Activated T-helper 1 cell treated with anti-CD3 and anti-CD28 coated beads, Interleukin-12 subunit alpha, Interleukin-12 subunit beta, Interleukin-2, Interleukin-4 antibody, amounts not matched to agents 30 ng/mL and 10 ng/mL and 1 ng/mL, durations not matched to agents 14 hours and 24 hours and 36 hours (primary cell): ENCODE measurements at regions of chr9 and their contacts with region 1.

Region 1: GRCh38 chr9:94213511-94214124 is 45.5 kb upstream of the ZNF169 start:
- DNase-seq: peak; percentile 66
- H3K4me3 Mint-ChIP-seq: no peak overlapping the region
- H3K27ac Mint-ChIP-seq: peak overlapping the region; percentile 3
- H3K4me1 Mint-ChIP-seq: peaks cover 5% of the 10 kb centered on the region
- H3K27me3 Mint-ChIP-seq: peaks cover 3% of the 10 kb centered on the region

Region 2: GRCh38 chr9:93682232-93682968 is 531.2 kb before region 1 on chr9:
- intact Hi-C with region 1: loop called (anchors 1 kb)
- DNase-seq: peak; percentile 41
- H3K4me3 Mint-ChIP-seq: no peak overlapping the region
- H3K27ac Mint-ChIP-seq: no peak overlapping the region
- H3K4me1 Mint-ChIP-seq: no peaks in the 10 kb centered on the region
- H3K27me3 Mint-ChIP-seq: peaks cover 2% of the 10 kb centered on the region

Region 3: GRCh38 chr9:93962561-93963440 is 250.8 kb before region 1 on chr9:
- intact Hi-C with region 1: loop called (anchors 1 kb)
- DNase-seq: peak; percentile 73
- H3K4me3 Mint-ChIP-seq: no peak overlapping the region
- H3K27ac Mint-ChIP-seq: no peak overlapping the region
- H3K4me1 Mint-ChIP-seq: peaks cover 16% of the 10 kb centered on the region
- H3K27me3 Mint-ChIP-seq: peaks cover 39% of the 10 kb centered on the region

Region 4: GRCh38 chr9:94014065-94014654 is 199.5 kb before region 1 on chr9:
- intact Hi-C with region 1: loop called (anchors 1 kb)
- DNase-seq: no peak
- H3K4me3 Mint-ChIP-seq: no peak overlapping the region
- H3K27ac Mint-ChIP-seq: no peak overlapping the region
- H3K4me1 Mint-ChIP-seq: no peaks in the 10 kb centered on the region
- H3K27me3 Mint-ChIP-seq: peaks cover 5% of the 10 kb centered on the region

Region 5: GRCh38 chr9:94065535-94065961 is 148.1 kb before region 1 on chr9:
- intact Hi-C with region 1: loop called (anchors 1 kb)
- DNase-seq: peak; percentile 43
- H3K4me3 Mint-ChIP-seq: no peak overlapping the region
- H3K27ac Mint-ChIP-seq: no peak overlapping the region
- H3K4me1 Mint-ChIP-seq: peaks cover 5% of the 10 kb centered on the region
- H3K27me3 Mint-ChIP-seq: no peaks in the 10 kb centered on the region

Region 6: DNA sequence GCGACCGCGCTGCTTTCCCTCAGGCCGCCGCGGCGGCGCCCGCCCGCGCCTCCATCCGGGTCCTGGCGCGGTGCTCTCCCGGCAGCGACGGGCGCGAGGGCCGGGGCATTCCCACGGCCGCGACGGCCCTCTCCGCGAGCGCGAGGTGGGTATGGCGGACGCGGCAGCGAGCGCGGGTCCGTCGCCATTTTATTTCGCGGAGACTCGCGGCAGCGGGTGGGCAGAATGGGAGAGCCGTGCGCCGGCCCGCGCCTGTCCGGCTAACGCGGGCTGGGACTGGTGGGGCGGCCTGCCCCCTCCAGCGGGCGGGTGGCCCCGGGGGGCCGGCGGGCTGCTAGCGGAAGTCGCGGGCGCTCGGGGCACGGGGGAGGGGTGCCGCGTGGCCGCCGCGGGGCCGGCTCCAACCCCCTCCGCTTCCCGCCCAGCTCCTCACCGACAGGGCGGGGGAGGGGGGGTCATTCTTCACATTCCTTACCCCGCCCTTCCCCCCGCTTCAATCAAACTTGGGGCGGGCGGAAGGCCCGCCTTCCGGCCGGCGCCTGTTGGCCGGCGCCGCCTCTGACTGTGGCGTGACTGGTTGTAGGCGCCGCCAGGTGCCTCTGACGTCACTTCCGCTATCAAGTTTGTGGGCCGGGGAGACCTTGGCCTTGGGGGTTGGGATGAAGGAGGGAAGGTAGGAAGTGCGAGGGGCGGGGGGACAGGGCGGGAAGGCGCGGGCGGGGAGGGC is 47.2 kb before region 1 on chr9:
- intact Hi-C with region 1: loop called (anchors 1 kb)
- DNase-seq: peak; percentile 92
- H3K4me3 Mint-ChIP-seq: peak overlapping the region; percentile 95
- H3K27ac Mint-ChIP-seq: peak overlapping the region; percentile 89
- H3K4me1 Mint-ChIP-seq: peaks cover 46% of the 10 kb centered on the region
- H3K27me3 Mint-ChIP-seq: peaks cover 2% of the 10 kb centered on the region